Activated naive CD4-positive, alpha-beta T cell treated with anti-CD3 and anti-CD28 coated beads for 36 hours (primary cell): ENCODE measurements at regions of chr6 and their contacts with region 1.

Region 1: GRCh38 chr6:26596579-26597388 is at the start of gene ABT1:
- DNase-seq: peak; percentile 99
- H3K4me3 Mint-ChIP-seq: no peak within 1 kb of the TSS
- H3K27ac Mint-ChIP-seq: no peak within 1 kb of the TSS
- H3K4me1 Mint-ChIP-seq: peaks cover 53% of the 10 kb centered on the region
- H3K27me3 Mint-ChIP-seq: peaks cover 24% of the 10 kb centered on the region
- total RNA-seq, gene ABT1: 17.3 to 18.4 TPM

Region 2: GRCh38 chr6:26065952-26066380 is 530.8 kb before region 1 on chr6:
- CTCF ChIA-PET with region 1: no interaction called
- intact Hi-C with region 1: loop called (anchors 10 kb)
- DNase-seq: peak; percentile 72
- H3K4me3 Mint-ChIP-seq: no peak overlapping the region
- H3K27ac Mint-ChIP-seq: no peak overlapping the region
- H3K4me1 Mint-ChIP-seq: peaks cover 4% of the 10 kb centered on the region
- H3K27me3 Mint-ChIP-seq: no peaks in the 10 kb centered on the region

Region 3: GRCh38 chr6:26520853-26521599 is 75.8 kb before region 1 on chr6:
- CTCF ChIA-PET with region 1: no interaction called
- intact Hi-C with region 1: loop called (anchors 1 kb)
- DNase-seq: peak; percentile 90
- H3K4me3 Mint-ChIP-seq: peak overlapping the region; percentile 76
- H3K27ac Mint-ChIP-seq: peak overlapping the region; percentile 94
- H3K4me1 Mint-ChIP-seq: peaks cover 27% of the 10 kb centered on the region
- H3K27me3 Mint-ChIP-seq: peaks cover 2% of the 10 kb centered on the region

Region 4: GRCh38 chr6:26553635-26554446 is 42.9 kb before region 1 on chr6:
- CTCF ChIA-PET with region 1: interaction called, 3 read pairs
- intact Hi-C with region 1: loop called (anchors 1 kb)
- DNase-seq: peak; percentile 91
- H3K4me3 Mint-ChIP-seq: no peak overlapping the region
- H3K27ac Mint-ChIP-seq: no peak overlapping the region
- H3K4me1 Mint-ChIP-seq: peaks cover 26% of the 10 kb centered on the region
- H3K27me3 Mint-ChIP-seq: no peaks in the 10 kb centered on the region

Region 5: DNA sequence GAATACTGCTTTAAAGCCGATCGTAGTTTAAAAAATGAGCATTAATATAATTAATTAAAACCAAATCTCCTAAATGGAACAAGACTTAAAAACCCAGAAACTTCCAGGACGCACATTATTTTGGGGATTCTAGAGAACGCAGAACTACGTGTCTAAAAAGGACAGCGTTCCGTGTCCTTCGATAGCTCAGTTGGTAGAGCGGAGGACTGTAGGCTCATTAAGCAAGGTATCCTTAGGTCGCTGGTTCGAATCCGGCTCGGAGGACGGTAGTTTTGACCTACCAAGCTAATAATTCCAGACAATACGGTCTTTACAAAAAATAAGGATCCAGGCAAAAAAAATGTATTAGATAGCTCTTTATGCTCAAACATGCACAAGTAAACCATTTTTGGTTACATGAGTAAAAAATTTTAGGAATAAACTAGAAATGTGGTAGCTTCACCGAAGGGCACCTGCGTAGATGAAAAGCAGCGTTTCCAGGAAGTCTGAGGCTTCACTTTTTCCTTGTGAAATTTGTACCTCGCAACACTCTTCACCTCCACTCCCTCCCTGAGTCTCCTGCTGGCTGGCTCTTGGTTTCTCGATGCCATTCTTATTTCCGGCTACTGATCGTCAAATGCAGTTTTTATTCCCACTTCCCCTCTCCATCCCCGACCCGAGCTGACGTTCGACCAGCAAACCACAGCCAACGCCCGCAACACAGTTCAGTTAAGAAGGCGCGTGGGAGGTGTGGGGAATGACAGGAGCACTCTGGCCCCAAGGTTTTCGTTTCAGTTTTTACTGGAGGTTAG is 19.7 kb before region 1 on chr6:
- CTCF ChIA-PET with region 1: interaction called, 106 read pairs
- intact Hi-C with region 1: loop called (anchors 1 kb)
- DNase-seq: peak; percentile 86
- H3K4me3 Mint-ChIP-seq: peak overlapping the region; percentile 68
- H3K27ac Mint-ChIP-seq: peak overlapping the region; percentile 77
- H3K4me1 Mint-ChIP-seq: peaks cover 31% of the 10 kb centered on the region
- H3K27me3 Mint-ChIP-seq: no peaks in the 10 kb centered on the region